Heart left ventricle (tissue), 16 donors: ENCODE measurements at regions of chr12 and their contacts with region 1.

Region 1: DNA sequence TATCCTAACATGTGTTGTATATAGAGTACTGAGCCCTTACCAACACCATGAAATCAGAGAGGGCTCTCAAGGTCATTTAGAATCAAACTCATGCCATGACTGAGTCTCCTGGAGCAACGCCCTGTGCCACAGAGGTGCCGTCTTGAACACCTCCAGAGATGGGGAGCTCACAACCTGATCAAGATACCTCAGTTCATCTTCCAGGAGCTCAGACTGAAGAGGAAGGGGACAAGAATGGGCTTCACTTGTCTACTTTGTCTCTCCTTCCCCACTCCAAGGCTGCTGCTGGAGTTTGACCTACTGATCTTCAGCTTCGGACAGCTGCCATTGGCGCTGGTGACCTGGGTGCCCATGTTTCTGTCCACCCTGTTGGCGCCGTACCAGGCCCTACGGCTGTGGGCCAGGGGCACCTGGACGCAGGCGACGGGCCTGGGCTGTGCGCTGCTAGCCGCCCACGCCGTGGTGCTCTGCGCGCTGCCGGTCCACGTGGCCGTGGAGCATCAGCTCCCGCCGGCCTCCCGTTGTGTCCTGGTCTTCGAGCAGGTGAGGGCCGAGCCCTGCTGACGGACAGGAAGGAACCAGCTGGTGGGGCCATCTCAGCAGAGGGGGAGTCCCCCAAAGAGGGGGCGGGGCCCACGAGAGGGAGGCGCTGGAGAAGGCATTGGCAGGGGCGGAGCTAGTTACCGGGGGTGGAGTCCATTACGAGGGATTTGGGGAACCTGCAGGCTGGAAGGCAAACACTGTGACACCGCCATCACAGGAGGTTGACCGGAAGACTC is 12.0 kb downstream of the SOAT2 start:
- DNase-seq: no peak
- ATAC-seq: peak in 1 of 4 donors; percentile 42
- H3K4me3 ChIP-seq: no peak overlapping the region
- H3K27ac ChIP-seq: peak overlapping the region in 10 of 12 donors; percentile 60 to 97 (median 80)
- H3K4me1 ChIP-seq: peaks cover 0 to 14% (median 7%) of the 10 kb centered on the region in 12 donors
- H3K27me3 ChIP-seq: no peaks in the 10 kb centered on the region
- CTCF ChIP-seq: no peak
- POLR2A ChIP-seq: no peak

Region 2: GRCh38 chr12:53065975-53066931 is 49.0 kb before region 1 on chr12:
- intact Hi-C with region 1: no loop called
- DNase-seq: peak; percentile 78 to 87 (median 83)
- ATAC-seq: peak; percentile 40 to 71 (median 50)
- H3K4me3 ChIP-seq: peak overlapping the region in 1 of 12 donors; percentile 10
- H3K27ac ChIP-seq: peak overlapping the region in 11 of 12 donors; percentile 39 to 86 (median 71)
- H3K4me1 ChIP-seq: peaks cover 5 to 97% (median 75%) of the 10 kb centered on the region in 12 donors
- H3K27me3 ChIP-seq: no peaks in the 10 kb centered on the region
- CTCF ChIP-seq: peak; percentile 86 to 95 (median 91)
- POLR2A ChIP-seq: no peak

Region 3: DNA sequence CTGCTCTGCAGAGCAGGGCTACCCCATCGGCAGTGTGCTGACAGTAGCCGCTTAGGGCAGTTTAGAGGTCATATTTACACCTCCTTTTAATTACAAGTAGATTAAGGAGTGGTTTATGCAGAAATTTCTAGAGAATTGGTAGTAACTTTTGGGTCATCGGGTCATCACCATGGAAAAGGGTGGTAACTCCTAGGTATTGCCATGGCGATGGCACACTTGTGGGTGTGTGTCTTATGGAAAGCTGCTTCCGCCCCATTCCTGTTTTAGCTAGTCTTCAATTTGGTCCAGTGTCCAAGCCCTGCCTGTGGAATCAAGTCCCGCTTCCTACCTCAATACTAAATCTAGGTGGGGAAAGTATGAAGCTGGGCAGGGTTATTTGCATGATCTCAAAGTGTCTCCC is 35.7 kb after region 1 on chr12:
- intact Hi-C with region 1: loop called in 2 of 10 experiments (anchors 5 kb)
- DNase-seq: no peak
- ATAC-seq: no peak
- H3K4me3 ChIP-seq: no peak overlapping the region
- H3K27ac ChIP-seq: no peak overlapping the region
- H3K4me1 ChIP-seq: peaks cover 0 to 5% (median 0%) of the 10 kb centered on the region in 12 donors
- H3K27me3 ChIP-seq: no peaks in the 10 kb centered on the region
- CTCF ChIP-seq: no peak
- POLR2A ChIP-seq: no peak